Colonic mucosa (tissue), 4 donors: ENCODE measurements at regions of chr9 and their contacts with region 1.

Region 1: DNA sequence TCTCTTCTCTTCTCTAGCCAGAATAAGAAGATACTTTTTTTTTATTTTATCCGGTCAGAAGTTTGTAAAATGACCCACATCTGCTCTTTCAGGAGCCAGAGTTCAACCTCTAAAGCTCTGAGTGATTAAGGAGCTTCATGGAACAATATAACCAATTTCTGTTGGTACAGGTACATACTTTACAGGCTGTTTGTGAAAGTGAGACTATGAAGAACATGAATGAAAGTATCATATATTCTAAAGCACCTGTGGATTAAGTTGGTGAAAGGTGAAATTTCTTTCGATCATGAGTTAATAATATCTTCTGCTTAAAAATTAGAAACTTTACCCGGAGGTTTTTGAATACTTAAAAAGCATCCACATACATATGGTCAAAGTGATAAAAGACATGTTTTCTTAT is 65.2 kb downstream of the DMRT2 start:
- DNase-seq: no peak
- H3K4me3 ChIP-seq: no peak overlapping the region
- H3K27ac ChIP-seq: no peak overlapping the region
- H3K4me1 ChIP-seq: no peaks in the 10 kb centered on the region
- H3K27me3 ChIP-seq: no peaks in the 10 kb centered on the region
- CTCF ChIP-seq: no peak

Region 2: DNA sequence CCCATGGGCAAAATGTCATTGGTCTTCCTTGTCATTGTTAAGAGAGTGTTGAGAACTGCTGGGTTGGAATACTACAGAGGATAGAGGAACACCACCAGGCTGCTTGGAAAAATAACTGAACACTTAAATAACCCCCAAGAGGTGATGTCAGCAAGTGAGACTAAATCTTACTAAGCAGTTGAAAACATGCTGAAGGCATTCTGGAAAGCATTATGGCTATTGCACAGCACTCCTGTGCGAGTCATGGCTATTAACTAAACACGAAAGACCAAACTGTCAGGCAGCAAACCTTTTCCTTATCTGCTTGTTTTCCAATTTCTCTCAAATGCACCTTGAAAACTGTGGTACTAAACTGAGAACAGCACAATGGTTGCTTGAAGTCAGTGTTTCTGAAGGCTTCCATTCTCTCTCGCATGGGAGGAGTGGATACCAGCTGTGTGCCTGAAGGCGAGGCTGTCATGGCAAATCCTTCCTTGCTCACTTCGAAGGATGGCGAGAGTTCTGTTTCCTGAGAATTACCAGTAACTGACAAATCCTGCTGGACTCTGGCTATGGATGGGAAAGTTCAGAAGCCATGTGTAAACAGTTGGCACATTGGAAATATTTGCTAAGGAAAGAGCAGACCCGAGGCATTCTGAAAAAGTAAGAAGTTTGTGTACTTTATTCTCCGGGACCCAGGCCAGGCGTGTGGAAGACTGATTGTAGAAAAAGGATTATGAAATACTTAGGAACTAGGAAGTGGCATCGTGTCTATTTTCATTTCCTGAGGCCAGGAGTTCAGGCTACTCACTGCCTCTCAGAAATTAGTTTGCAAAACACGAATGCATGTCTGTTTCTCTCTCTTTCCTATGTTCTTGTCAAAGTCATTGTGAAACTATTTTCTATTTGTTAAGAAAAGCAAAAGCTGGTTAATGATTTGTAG is 116.9 kb after region 1 on chr9:
- intact Hi-C with region 1: no loop called
- DNase-seq: peak; percentile 68
- H3K4me3 ChIP-seq: no peak overlapping the region
- H3K27ac ChIP-seq: no peak overlapping the region
- H3K4me1 ChIP-seq: no peaks in the 10 kb centered on the region
- H3K27me3 ChIP-seq: no peaks in the 10 kb centered on the region
- CTCF ChIP-seq: no peak

Region 3: DNA sequence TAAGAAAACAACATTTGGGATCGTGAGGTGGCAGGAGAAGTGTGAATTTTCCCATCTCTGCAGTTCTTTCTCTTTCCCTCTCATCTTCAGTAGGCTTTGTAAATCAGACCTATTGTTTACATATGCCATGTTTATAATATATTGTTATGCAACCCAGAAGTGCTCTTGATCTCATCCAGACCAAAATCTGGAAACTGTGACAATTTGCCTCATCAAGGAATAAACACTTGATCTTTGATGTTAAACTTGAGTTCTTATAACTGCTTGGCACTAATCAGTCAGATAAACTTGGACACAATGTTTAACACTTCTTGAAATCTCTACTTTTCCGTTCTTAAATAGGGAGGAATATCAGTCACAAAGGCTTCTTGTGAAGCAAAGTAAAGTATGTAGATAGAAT is 319.4 kb after region 1 on chr9:
- intact Hi-C with region 1: loop called (anchors 5 kb)
- DNase-seq: no peak
- H3K4me3 ChIP-seq: no peak overlapping the region
- H3K27ac ChIP-seq: no peak overlapping the region
- H3K4me1 ChIP-seq: no peaks in the 10 kb centered on the region
- H3K27me3 ChIP-seq: no peaks in the 10 kb centered on the region
- CTCF ChIP-seq: no peak